Right cardiac atrium (tissue), 5 donors: ENCODE measurements at regions of chr17 and their contacts with region 1.

Region 1: GRCh38 chr17:64202675-64203344 is 60.2 kb downstream of the TEX2 start:
- DNase-seq: no peak
- ATAC-seq: peak; percentile 52 to 65
- H3K4me3 ChIP-seq: no peak overlapping the region
- H3K27ac ChIP-seq: peak overlapping the region; percentile 76
- H3K4me1 ChIP-seq: peaks cover 3% of the 10 kb centered on the region
- H3K27me3 ChIP-seq: no peaks in the 10 kb centered on the region

Region 2: GRCh38 chr17:64107500-64108235 is 95.1 kb before region 1 on chr17:
- intact Hi-C with region 1: no loop called
- DNase-seq: no peak
- ATAC-seq: peak; percentile 29 to 40
- H3K4me3 ChIP-seq: no peak overlapping the region
- H3K27ac ChIP-seq: no peak overlapping the region
- H3K4me1 ChIP-seq: no peaks in the 10 kb centered on the region
- H3K27me3 ChIP-seq: no peaks in the 10 kb centered on the region

Region 3: GRCh38 chr17:64155751-64156544 is 46.9 kb before region 1 on chr17:
- intact Hi-C with region 1: loop called in 1 of 4 experiments (anchors 10 kb)
- DNase-seq: peak; percentile 76 to 89 (median 85)
- ATAC-seq: peak; percentile 94 to 95
- H3K4me3 ChIP-seq: no peak overlapping the region
- H3K27ac ChIP-seq: peak overlapping the region; percentile 93
- H3K4me1 ChIP-seq: peaks cover 23% of the 10 kb centered on the region
- H3K27me3 ChIP-seq: no peaks in the 10 kb centered on the region